ENCODE measurements at regions of chr21 and their contacts with region 1.

Region 1: DNA sequence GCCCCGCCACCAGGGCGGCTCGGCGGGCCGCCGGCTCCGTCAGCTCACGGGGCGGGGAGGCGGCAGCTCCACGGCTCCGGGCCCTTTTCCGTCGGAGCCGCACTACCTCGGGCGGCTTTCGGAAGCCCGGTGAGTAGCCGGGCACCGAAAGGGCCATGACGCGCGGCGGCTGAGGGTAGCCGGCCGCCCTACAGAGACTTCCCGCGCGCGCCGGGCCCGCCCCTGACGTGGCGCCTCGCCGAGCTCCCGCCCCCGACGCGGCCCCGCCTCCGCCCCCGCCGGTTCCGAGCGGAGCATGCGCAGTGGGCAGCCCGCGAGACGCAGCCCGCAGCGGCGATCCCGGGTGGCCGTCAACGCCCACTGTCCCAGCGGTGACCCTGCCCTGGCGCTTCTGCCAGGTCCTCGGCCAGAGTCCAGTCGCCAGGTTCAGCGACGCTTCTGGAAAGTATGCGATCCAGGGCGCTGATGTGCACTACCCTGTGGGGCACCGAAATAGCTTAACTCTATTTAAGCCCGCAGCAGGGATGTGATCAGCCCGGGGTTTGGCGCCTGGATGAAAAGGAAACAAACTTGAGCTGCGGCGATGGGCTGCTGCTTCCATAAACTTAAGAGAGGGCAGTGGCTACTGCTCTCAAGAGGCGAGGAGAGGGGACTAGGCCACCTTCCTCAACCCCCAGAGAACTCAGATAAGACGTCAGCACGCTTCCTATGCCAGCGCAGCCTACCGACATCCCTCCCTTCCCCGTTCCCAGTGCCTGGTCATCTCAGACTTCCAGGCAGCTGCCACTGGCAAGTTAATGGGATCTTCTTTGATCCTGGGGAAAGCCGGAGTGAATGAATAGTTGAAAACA is at the start of gene DONSON:
- DNase-seq: peak; percentile 87
- ATAC-seq: peak; percentile 85
- H3K4me3 ChIP-seq: peak within 1 kb of the TSS; percentile 98
- H3K27ac ChIP-seq: peak within 1 kb of the TSS; percentile 51
- H3K4me1 ChIP-seq: peaks cover 25% of the 10 kb centered on the region
- H3K27me3 ChIP-seq: no peaks in the 10 kb centered on the region
- CTCF ChIP-seq: no peak
- total RNA-seq, gene DONSON: 29.2 and 41.9 TPM in 2 replicates

Region 2: DNA sequence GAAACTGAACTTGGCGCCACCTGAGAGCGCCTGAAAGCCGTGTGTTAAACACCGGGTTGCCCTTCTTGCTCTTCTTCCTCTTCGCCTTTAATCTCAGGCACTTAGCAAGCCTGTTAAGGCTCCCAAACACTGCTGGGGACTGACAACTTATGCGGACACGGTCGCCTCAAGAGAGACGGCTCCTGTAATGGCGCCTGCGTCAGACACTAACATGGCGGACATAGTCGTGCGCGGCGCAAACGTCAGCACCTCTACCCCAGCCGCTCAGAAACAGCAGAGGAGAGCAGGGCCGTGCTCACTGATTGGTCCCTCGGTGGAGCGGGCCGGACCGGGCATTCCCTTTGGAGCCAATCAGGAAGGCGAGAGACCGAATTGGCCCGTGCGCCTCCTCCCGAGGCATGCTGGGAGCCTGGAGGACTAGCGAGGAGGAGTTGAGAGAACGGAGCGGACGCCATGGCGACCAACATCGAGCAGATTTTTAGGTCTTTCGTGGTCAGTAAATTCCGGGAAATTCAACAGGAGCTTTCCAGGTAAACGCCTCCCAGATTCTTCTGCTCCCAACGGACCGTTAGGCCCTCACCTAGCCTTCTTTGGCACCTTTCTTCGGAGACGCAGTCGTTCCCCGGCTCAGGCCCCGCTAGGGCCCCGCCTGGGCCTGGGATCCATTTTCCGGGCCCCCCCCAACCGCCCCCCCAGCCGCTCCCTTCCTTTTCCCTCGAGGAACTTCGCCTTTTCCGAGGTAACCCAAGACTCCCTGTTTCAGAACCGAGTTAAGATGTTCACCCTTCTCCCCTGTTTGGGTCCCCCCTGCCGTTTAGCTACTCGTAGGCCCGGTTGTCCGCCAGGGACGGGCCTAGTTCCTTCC is 45.8 kb before region 1 on chr21 and contains the start of gene SON:
- CTCF ChIA-PET with region 1: interaction called, 4 read pairs
- POLR2A ChIA-PET with region 1: interaction called, 5 read pairs
- intact Hi-C with region 1: loop called (anchors 5 kb)
- DNase-seq: peak; percentile 99
- ATAC-seq: peak; percentile 95
- H3K4me3 ChIP-seq: peak within 1 kb of the TSS; percentile 94
- H3K27ac ChIP-seq: peak within 1 kb of the TSS; percentile 98
- H3K4me1 ChIP-seq: peaks cover 22% of the 10 kb centered on the region
- H3K27me3 ChIP-seq: no peaks in the 10 kb centered on the region
- CTCF ChIP-seq: no peak
- total RNA-seq, gene SON: 180 and 373 TPM in 2 replicates

Measured in PC-3 (cell line).